Sigmoid colon (tissue), 7 donors: ENCODE measurements at regions of chr14 and their contacts with region 1.

Region 1: GRCh38 chr14:68762953-68763764 is 29.7 kb downstream of the ZFP36L1 start:
- DNase-seq: peak; percentile 84
- H3K4me3 ChIP-seq: no peak overlapping the region
- H3K27ac ChIP-seq: peak overlapping the region; percentile 23 to 64 (median 48)
- H3K4me1 ChIP-seq: peaks cover 0 to 11% (median 3%) of the 10 kb centered on the region in 4 donors
- H3K27me3 ChIP-seq: no peaks in the 10 kb centered on the region
- CTCF ChIP-seq: no peak
- EP300 ChIP-seq: no peak
- POLR2A ChIP-seq: no peak

Region 2: GRCh38 chr14:68719634-68720384 is 43.4 kb before region 1 on chr14:
- intact Hi-C with region 1: loop called (anchors 5 kb)
- DNase-seq: no peak
- H3K4me3 ChIP-seq: no peak overlapping the region
- H3K27ac ChIP-seq: no peak overlapping the region
- H3K4me1 ChIP-seq: peaks cover 0 to 8% (median 0%) of the 10 kb centered on the region in 4 donors
- H3K27me3 ChIP-seq: no peaks in the 10 kb centered on the region
- CTCF ChIP-seq: no peak
- EP300 ChIP-seq: no peak
- POLR2A ChIP-seq: no peak